HepG2 (cell line): ENCODE measurements at regions of chr1 and their contacts with region 1.

Region 1: DNA sequence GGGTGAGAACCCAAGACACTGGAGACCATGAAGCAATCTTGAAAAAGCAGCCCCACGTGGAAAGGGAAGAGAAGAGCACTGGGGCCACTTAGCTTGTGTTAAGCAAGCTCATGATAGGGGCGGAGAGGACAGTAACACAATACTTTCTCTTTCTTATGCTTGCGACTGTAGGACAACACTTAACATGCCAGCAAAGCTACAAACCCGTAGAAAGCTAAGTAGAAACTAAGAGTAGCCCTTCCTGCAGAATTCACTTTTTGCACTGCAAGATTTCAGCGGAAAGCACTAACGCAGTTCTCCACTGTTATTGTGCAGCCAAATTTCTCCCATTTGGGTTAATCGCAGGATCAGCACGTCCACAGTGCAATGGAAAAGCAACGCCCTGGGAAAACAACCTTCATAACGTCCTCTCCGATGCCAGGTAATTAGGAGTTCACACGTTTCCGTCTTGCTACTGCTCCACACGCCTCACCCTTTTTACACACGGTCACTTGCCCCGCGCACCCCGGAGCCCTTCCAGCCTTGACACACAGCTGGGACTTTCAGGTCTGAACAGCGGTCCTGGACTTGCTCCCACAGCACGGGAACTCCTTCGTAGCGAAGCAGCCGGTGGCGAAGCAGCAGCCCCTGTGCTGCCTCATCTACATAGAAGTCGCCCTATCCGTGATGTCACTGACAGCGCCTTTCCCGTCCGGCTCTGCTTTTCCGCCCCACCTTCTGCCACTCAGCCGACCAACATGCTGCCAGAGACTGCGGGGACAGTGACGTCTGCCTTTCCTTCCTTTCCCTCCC is 148.6 kb downstream of the PPIAL4G start:
- DNase-seq: peak; percentile 64
- ATAC-seq: peak; percentile 84
- H3K4me3 ChIP-seq: peak overlapping the region; percentile 46 to 73 (median 61)
- H3K27ac ChIP-seq: peak overlapping the region; percentile 10
- H3K4me1 ChIP-seq: peaks cover 18% of the 10 kb centered on the region
- H3K27me3 ChIP-seq: peaks cover 0 to 18% of the 10 kb centered on the region in 2 experiments; a peak in 1 of 5 replicates
- CTCF ChIP-seq: no peak
- EP300 ChIP-seq: no peak
- POLR2A ChIP-seq: peak; percentile 93 to 100
- RAD21 ChIP-seq: no peak

Region 2: DNA sequence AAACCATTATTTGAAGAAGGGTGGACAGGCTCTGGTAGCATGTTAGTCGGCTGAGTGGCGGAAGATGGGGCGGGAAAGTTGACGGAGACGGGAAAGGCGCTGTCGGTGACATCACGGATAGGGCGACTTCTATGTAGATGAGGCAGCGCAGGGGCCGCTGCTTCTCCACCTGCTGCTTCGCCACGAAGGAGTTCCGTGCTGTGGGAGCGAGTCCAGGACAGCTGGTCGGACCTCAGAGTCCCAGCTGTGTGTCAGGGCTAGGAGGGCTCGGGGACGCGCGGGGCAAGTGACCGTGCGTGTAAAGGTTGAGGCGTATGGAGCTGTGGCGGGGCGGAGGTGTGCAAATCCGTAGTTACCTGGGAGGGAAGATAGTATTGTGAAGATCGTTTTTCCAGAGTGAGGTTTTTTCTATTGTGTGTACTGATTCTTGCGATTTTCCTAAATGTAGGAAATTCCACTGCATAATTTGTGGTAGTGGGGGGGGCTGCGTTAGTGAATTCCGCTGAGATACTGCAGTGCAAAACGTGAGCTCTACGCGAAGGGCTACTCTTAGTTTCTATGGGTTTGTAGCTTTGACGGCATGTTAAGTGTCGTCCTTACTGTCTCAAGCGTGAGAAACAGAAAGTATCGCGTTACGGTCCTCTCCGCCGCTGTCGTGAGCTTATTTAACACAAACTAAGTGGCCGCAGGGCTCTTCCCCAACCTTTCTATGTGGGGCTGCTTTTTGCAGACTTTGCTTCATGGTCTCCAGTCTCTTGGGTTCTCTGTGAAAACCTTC is 71.2 kb before region 1 on chr1:
- CTCF ChIA-PET with region 1: no interaction called
- POLR2A ChIA-PET with region 1: interaction called, 34 read pairs
- in situ Hi-C with region 1: no loop called
- intact Hi-C with region 1: no loop called
- DNase-seq: peak; percentile 66
- ATAC-seq: peak; percentile 90
- H3K4me3 ChIP-seq: peak overlapping the region; percentile 32 to 63 (median 53)
- H3K27ac ChIP-seq: no peak overlapping the region
- H3K4me1 ChIP-seq: peaks cover 6% of the 10 kb centered on the region; the same call in 1 of the 2 replicates
- H3K27me3 ChIP-seq: peaks cover 0 to 9% of the 10 kb centered on the region in 2 experiments; a peak in 2 of 5 replicates
- CTCF ChIP-seq: no peak
- EP300 ChIP-seq: peak in 1 of 2 experiments; percentile 12; a peak in 1 of 4 replicates
- POLR2A ChIP-seq: peak; percentile 90 to 100
- RAD21 ChIP-seq: peak; percentile 45; the same call in 1 of the 2 replicates